AG04449 (cell line): ENCODE measurements at regions of chr5 and their contacts with region 1.

Region 1: DNA sequence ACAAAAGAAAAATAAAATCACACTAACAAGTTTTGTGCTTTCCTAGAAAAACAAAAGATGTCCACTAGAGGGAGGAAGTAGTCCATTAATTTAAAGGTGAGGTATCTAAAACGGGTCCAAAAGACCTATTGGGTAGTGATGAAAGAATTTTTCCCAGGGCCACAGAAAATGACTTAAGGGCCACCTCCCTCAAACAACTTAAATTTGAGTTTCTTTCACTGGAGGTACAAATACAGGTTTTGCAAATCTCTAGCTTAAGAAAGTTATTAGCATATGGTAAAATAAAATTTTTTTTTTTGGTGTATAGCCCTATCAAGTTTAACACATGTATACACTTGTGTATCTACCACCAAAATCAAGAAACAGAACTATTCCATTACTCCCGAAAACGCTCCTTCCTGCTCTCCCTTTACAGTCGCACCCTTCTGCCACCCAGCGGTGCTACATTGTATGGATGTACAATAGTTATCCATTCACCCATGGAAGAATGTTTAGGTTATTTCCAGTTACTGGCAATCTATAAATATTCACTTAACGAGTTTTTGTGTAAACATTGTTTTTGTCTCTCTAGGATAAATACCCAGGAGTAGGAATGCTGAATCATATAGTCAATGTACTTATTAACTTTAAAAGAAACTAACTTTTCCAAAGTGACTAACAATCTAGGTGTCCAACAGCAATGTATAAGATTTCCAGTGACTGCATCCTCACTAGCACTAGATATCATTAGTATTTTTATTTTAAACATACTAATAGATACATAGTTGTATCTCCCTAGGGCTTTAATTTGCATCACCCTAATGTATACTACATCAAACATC is 21.9 kb downstream of the DEPDC1B start:
- DNase-seq: no peak
- H3K4me3 ChIP-seq: no peak overlapping the region
- CTCF ChIP-seq: peak; percentile 21

Region 2: DNA sequence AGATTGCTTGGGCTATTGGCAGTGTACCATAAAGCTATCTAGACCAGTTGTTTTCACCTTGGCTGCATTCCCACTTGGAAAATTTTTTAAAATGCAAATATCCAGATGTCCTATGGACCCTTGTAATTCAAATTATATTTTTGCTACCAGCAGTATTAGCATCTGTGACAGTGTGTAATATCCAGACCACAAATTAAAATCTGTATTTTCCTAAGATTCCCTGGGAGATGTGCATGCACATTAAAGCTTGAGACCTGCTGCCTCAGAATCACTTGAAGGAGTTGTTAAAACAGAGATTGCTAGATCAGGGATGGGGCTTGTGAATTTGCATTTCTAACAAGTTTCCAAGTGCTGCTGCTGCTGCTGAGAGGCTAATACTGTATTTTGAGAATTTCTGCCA is 403.3 kb before region 1 on chr5:
- CTCF ChIA-PET with region 1: no interaction called
- POLR2A ChIA-PET with region 1: no interaction called
- DNase-seq: no peak
- H3K4me3 ChIP-seq: no peak overlapping the region
- CTCF ChIP-seq: no peak

Region 3: DNA sequence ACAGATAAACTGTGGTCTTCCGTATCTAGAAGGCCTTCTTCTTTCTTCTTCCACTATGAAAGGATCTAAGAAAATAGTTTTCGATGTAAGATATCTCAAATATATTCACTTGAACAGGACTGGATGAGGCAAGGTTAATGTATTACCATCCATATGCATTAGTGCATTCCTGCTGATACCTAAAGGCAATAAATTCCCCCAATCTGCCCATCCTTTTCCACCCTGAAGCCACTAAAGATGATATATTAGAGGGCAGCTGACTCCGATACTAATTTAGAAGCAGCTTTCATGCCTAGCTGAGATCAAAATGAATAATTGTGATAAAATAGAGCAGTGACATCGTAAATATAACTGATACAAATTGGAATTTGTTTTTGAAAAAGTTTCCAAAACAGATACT is 41.4 kb before region 1 on chr5:
- CTCF ChIA-PET with region 1: no interaction called
- POLR2A ChIA-PET with region 1: no interaction called
- DNase-seq: no peak
- H3K4me3 ChIP-seq: no peak overlapping the region
- CTCF ChIP-seq: no peak

Region 4: DNA sequence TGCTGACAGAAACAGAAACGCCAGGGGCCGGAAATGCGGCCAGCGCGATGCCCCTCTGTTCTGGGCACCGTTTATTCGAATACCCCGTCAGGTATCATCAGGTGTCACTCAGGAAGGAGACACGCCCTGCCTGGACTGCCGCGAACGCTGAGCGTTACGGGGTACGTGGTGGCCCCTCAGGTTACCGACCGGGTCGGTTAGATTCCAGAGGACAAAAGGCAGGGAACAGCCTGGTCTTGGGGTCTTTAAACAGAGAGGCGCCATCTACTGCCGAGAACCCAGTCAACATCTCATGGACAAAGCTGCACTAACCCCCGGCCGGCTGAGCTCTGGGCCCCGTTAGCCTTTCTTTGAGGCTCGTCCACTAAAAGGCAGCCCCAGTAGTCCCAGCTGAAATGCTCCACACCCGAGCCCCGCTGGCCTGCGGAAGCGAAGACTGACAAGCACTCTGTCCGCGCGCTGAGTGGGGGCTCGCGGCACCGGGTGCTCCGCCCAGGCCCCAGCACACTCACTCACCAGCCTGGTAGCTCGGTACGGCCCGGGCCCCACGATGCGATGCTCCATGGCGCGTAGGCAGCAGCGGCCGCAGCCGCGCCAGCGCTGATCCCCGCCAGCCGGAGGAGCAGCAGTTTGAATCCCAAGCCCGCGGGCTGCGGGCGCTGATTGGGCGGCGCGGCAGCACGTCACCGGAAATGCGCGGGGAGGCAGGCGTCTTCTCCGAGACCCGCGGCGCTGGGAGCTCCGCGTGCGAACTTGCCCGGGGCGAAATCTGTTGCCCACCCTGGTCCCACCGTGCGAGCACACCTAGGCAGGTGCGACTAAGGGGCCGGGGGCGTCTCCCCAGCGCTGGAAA is 21.7 kb after region 1 on chr5 and contains the start of gene DEPDC1B:
- CTCF ChIA-PET with region 1: interaction called, 71 read pairs
- POLR2A ChIA-PET with region 1: no interaction called
- DNase-seq: peak; percentile 31
- H3K4me3 ChIP-seq: peak within 1 kb of the TSS; percentile 92
- CTCF ChIP-seq: peak; percentile 45

Region 5: GRCh38 chr5:60929024-60929423 is 251.0 kb after region 1 on chr5:
- CTCF ChIA-PET with region 1: interaction called, 10 read pairs
- POLR2A ChIA-PET with region 1: no interaction called
- DNase-seq: no peak
- H3K4me3 ChIP-seq: no peak overlapping the region
- CTCF ChIP-seq: no peak

Region 6: DNA sequence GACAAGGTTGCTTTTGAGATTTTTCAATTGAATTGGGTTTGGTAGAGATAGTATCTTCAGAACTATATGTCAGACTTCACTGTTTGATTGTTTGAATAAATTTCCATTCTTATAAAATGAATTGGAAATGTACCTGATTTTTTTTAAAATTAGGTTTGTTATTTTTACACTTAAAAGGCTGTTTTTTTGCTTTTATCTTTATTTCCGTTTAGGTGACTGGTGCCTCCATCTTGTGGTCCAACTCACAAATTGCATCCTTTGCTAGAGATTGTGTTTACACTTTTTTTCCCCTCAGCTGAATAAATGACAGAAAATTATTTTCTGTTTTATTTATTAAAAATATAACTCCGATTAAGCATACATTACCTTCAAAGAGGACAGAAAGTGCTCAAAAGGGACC is 282.5 kb after region 1 on chr5:
- CTCF ChIA-PET with region 1: interaction called, 12 read pairs
- POLR2A ChIA-PET with region 1: no interaction called
- DNase-seq: no peak
- H3K4me3 ChIP-seq: no peak overlapping the region
- CTCF ChIP-seq: peak; percentile 23